A549 (cell line): ENCODE measurements at regions of chr12 and their contacts with region 1.

Region 1: GRCh38 chr12:38138225-38139221 is 178.1 kb upstream of the ALG10B start:
- DNase-seq: peak; percentile 72 to 81
- ATAC-seq: peak; percentile 94 to 95
- H3K4me3 ChIP-seq: peak overlapping the region; percentile 58
- H3K27ac ChIP-seq: peak overlapping the region; percentile 85
- H3K4me1 ChIP-seq: peaks cover 12% of the 10 kb centered on the region; the same call in 1 of the 3 replicates
- CTCF ChIP-seq: peak; percentile 92
- EP300 ChIP-seq: no peak
- POLR2A ChIP-seq: no peak
- RAD21 ChIP-seq: peak; percentile 90 to 91

Region 2: DNA sequence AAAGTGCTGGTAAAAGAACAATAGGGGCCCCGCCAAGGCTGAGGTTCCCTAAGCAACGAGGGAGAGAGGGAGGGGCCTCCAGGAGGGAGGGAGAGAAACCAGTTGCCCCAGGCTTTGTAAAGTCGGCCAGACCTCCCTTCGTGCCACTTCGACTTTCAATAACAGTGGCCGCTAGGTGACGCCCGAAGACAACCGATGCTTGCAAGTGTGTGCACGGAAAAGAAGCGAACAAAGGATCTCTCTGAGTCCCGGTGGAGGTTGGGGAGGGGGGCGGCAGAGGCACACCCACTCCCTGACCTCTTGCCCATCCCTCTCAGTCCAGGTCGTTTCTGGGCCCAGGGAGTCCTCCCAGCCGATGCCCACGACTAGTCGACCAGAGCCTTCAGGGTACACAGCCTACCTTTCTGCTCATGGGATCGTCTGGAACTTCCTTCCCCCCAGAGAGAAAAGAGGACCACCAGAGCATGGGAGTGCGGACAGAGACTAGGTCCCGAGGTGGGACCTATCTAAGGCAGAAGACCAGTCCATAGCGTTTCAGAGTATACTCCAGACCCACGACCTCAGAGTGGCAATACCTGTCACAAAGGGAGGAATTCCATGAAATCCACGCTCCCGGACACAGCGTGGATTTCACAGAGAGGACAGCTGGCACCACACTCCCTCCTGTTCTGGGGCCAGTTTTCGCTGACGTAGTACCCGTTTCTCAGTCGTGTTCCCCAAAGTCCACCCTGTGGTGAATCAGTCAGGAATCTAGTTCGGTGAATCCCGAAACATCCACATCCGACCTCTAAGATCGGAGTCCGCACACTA is 84.7 kb before region 1 on chr12:
- CTCF ChIA-PET with region 1: interaction called, 19 read pairs
- POLR2A ChIA-PET with region 1: no interaction called
- DNase-seq: peak; percentile 43 to 85
- ATAC-seq: peak; percentile 20 to 68; a peak in 4 of 6 replicates
- H3K4me3 ChIP-seq: no peak overlapping the region
- H3K27ac ChIP-seq: peak overlapping the region; percentile 39 to 80; a peak in 4 of 6 replicates
- H3K4me1 ChIP-seq: peaks cover 14% of the 10 kb centered on the region
- CTCF ChIP-seq: peak; percentile 73
- EP300 ChIP-seq: no peak
- POLR2A ChIP-seq: no peak
- RAD21 ChIP-seq: peak; percentile 94 to 99

Region 3: GRCh38 chr12:38149395-38150286 is 11.1 kb after region 1 on chr12:
- CTCF ChIA-PET with region 1: no interaction called
- POLR2A ChIA-PET with region 1: no interaction called
- DNase-seq: peak in 1 of 2 experiments; percentile 27
- ATAC-seq: peak; percentile 65 to 76; a peak in 4 of 6 replicates
- H3K4me3 ChIP-seq: no peak overlapping the region
- H3K27ac ChIP-seq: peak overlapping the region in 1 of 2 experiments; percentile 56; a peak in 2 of 6 replicates
- H3K4me1 ChIP-seq: peaks cover 7% of the 10 kb centered on the region; the same call in 1 of the 3 replicates
- CTCF ChIP-seq: no peak
- EP300 ChIP-seq: no peak
- POLR2A ChIP-seq: no peak
- RAD21 ChIP-seq: no peak

Region 4: GRCh38 chr12:38161123-38162000 is 22.8 kb after region 1 on chr12:
- CTCF ChIA-PET with region 1: no interaction called
- POLR2A ChIA-PET with region 1: no interaction called
- DNase-seq: no peak
- ATAC-seq: peak; percentile 26 to 28; a peak in 2 of 6 replicates
- H3K4me3 ChIP-seq: no peak overlapping the region
- H3K27ac ChIP-seq: no peak overlapping the region
- H3K4me1 ChIP-seq: no peaks in the 10 kb centered on the region
- CTCF ChIP-seq: no peak
- EP300 ChIP-seq: no peak
- POLR2A ChIP-seq: no peak
- RAD21 ChIP-seq: no peak

Region 5: DNA sequence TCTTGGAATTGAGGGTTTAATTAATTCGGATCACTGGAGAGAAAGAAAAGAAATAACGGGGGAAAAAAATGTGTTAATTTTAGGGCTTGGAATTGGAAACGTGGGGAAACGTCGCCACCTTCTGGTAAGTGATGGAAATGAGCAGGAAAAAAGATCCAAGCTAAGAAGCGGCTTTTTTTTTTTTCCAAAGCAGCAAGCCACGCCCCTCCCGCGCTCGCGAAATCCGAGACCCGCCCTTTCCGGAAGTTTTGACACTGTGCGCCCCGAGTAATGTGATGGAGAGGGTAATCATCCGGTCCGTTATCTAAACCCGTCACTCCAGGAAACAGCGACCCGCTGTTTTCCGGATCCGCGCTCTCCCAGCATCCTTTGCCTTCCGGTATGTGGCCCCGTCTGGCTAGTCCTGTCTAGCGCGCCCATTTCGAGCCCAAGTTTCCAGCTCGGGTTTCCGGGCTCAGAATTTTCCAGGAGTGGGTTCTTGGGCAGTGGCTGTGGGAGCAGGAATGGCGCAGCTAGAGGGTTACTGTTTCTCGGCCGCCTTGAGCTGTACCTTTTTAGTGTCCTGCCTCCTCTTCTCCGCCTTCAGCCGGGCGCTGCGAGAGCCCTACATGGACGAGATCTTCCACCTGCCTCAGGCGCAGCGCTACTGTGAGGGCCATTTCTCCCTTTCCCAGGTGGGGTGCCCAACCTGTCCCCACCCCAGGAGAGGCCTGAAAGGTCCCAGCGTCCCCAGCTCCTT is 178.0 kb after region 1 on chr12 and contains the start of gene ALG10B:
- CTCF ChIA-PET with region 1: interaction called, 11 read pairs
- POLR2A ChIA-PET with region 1: interaction called, 3 read pairs
- DNase-seq: peak; percentile 81 to 98
- ATAC-seq: peak; percentile 100
- H3K4me3 ChIP-seq: peak within 1 kb of the TSS; percentile 80
- H3K27ac ChIP-seq: peak within 1 kb of the TSS; percentile 83 to 96
- H3K4me1 ChIP-seq: peaks cover 3% of the 10 kb centered on the region; the same call in 1 of the 3 replicates
- CTCF ChIP-seq: peak; percentile 80
- EP300 ChIP-seq: no peak
- POLR2A ChIP-seq: peak; percentile 43
- RAD21 ChIP-seq: peak; percentile 88 to 94
- polyA plus RNA-seq, gene ALG10B: 10.5 and 15.2 TPM in 2 replicates

Region 6: GRCh38 chr12:38625306-38625705 is 486.8 kb after region 1 on chr12:
- CTCF ChIA-PET with region 1: no interaction called
- POLR2A ChIA-PET with region 1: no interaction called
- DNase-seq: no peak
- ATAC-seq: no peak
- H3K4me3 ChIP-seq: no peak overlapping the region
- H3K27ac ChIP-seq: no peak overlapping the region
- H3K4me1 ChIP-seq: no peaks in the 10 kb centered on the region
- CTCF ChIP-seq: no peak
- EP300 ChIP-seq: no peak
- POLR2A ChIP-seq: no peak
- RAD21 ChIP-seq: no peak